Activated CD4-positive, alpha-beta memory T cell treated with anti-CD3 and anti-CD28 coated beads for 36 hours (primary cell): ENCODE measurements at regions of chr14 and their contacts with region 1.

Region 1: DNA sequence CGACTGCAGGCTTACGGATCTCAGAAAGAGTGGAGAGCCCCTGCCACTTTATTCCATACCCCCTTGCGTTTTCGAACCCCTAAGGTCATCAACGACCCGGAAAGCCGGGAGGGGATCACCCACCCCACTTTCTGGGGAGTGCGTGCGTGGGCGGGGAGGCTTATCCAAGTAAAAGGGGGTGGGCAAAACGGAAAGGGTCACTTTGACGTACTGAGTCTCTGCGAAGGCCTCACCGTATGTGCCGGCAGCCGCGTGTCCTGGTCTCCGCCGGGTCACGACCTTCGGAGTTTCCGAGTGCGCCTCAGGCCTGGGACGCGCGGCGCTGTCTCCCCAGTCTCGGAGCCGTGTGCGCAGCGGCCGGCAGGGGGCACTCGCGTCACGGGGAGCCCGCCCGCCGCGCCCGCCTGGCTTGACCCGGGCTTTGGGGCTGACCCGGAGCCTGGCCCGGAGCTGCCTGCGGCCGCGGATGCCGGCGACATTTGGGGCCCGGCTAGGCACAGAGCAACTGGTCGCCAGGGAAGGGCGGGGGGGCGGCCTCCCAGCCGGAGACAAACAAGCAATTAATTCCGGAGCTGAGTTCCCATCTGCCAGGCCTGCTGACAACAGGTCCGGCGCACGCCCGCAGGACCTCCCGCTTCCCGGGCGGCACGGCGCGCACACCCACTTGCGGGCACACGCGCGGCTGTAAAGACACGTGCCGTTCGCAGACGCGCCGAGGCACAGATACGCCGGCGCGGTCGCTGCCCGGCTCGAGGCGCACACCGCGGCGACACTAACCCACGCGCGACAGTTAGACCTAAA is 890 bp upstream of the KIF26A start:
- DNase-seq: peak; percentile 70
- H3K4me3 Mint-ChIP-seq: peak overlapping the region; percentile 35
- H3K27ac Mint-ChIP-seq: no peak overlapping the region
- H3K4me1 Mint-ChIP-seq: peaks cover 8% of the 10 kb centered on the region
- H3K27me3 Mint-ChIP-seq: peaks cover 34% of the 10 kb centered on the region

Region 2: GRCh38 chr14:104094709-104095438 is 42.6 kb before region 1 on chr14:
- CTCF ChIA-PET with region 1: interaction called, 3 read pairs
- POLR2A ChIA-PET with region 1: no interaction called
- intact Hi-C with region 1: loop called (anchors 5 kb)
- DNase-seq: peak; percentile 82
- H3K4me3 Mint-ChIP-seq: no peak overlapping the region
- H3K27ac Mint-ChIP-seq: no peak overlapping the region
- H3K4me1 Mint-ChIP-seq: peaks cover 5% of the 10 kb centered on the region
- H3K27me3 Mint-ChIP-seq: peaks cover 3% of the 10 kb centered on the region

Region 3: GRCh38 chr14:104171029-104171697 is 33.7 kb after region 1 on chr14:
- CTCF ChIA-PET with region 1: no interaction called
- POLR2A ChIA-PET with region 1: no interaction called
- intact Hi-C with region 1: no loop called
- DNase-seq: no peak
- H3K4me3 Mint-ChIP-seq: no peak overlapping the region
- H3K27ac Mint-ChIP-seq: no peak overlapping the region
- H3K4me1 Mint-ChIP-seq: no peaks in the 10 kb centered on the region
- H3K27me3 Mint-ChIP-seq: no peaks in the 10 kb centered on the region

Region 4: GRCh38 chr14:104563742-104564615 is 426.5 kb after region 1 on chr14:
- CTCF ChIA-PET with region 1: interaction called, 6 read pairs
- POLR2A ChIA-PET with region 1: no interaction called
- intact Hi-C with region 1: loop called (anchors 1 kb)
- DNase-seq: peak; percentile 75
- H3K4me3 Mint-ChIP-seq: no peak overlapping the region
- H3K27ac Mint-ChIP-seq: no peak overlapping the region
- H3K4me1 Mint-ChIP-seq: no peaks in the 10 kb centered on the region
- H3K27me3 Mint-ChIP-seq: peaks cover 10% of the 10 kb centered on the region

Region 5: DNA sequence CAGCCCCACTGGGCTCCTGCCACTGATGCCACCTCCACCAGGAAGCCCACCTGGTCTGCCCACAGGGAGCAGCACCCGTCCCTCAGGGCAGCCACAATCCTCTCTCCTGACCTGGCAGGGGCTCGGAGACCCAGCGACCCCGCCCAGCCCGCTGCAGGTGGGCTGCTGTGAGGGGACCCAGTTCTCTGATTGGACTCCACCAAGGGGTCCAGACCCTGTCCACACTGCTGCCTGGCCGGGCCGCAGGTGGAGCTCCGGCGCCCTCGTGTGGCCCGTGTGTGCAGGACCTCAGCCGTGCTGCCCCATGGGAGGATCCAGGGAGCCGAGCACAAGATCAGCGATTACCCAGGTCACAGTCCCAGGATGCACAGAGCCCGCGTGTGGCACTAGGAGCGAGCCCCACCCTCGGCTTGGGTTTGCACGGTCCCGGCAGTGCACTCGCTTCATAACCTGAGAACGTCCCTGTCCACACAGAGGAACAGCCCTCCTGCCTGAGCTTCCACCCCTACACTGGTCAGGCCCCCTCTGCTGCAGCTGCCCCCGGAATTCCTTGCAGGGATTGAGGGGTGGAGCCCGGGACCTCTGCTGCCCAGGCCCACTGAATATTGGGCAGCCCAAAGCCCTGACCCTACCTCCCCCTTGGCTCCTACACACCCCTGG is 502.5 kb after region 1 on chr14:
- CTCF ChIA-PET with region 1: interaction called, 4 read pairs
- POLR2A ChIA-PET with region 1: no interaction called
- intact Hi-C with region 1: loop called (anchors 5 kb)
- DNase-seq: peak; percentile 65
- H3K4me3 Mint-ChIP-seq: no peak overlapping the region
- H3K27ac Mint-ChIP-seq: no peak overlapping the region
- H3K4me1 Mint-ChIP-seq: no peaks in the 10 kb centered on the region
- H3K27me3 Mint-ChIP-seq: peaks cover 15% of the 10 kb centered on the region